ENCODE measurements at regions of chr1 and their contacts with region 1.

Region 1: DNA sequence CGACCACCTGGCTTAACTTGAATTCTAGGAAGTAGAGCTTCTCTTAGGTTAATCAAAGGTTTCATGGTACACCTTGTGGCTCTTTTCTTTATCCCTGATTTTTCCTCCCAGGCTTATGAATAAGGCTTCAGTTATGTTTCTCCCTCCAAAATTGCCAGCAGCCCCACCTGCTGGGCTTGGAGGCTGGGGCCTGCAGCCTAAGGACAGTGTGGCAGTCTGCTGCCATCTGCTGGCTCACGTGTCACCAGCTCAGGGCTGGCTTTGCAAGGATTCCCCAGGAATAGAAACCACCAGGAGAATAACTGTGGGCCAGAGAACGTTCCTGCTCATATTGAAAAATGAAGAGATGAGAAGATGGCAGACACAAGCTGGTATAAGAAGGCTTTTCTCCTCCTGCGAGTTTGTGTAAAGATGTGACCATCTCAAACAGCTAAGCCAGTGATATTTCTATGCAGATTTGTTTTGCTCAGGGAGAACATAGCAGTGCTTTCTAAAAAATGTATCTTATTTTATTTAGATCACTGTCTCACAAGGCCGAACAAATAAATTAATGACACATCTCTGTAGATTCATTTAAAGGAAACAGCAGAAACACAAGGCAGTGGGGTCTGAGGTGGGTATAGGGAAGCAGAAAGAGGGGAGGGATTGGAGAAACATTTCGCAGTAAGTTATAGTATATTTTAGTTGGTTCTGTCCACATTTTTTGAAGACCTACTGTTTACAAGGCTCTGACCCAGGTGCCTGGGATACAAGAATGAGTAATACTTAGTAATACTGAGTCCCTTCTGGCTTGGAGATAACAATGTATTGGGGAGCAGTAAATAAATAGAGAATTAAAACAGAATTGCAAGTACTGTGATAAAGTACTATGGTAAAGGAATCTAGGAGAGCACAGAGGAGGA is 291.1 kb upstream of the SGIP1 start:
- DNase-seq: peak; percentile 64 to 84 (median 70)
- ATAC-seq: peak; percentile 100
- H3K4me3 ChIP-seq: no peak overlapping the region
- H3K27ac ChIP-seq: no peak overlapping the region
- H3K4me1 ChIP-seq: no peaks in the 10 kb centered on the region
- H3K27me3 ChIP-seq: peaks cover 0 to 2% of the 10 kb centered on the region in 2 experiments; a peak in 1 of 5 replicates
- CTCF ChIP-seq: peak; percentile 99 to 100 (median 100)
- EP300 ChIP-seq: no peak
- POLR2A ChIP-seq: no peak
- RAD21 ChIP-seq: peak; percentile 93 to 98

Region 2: GRCh38 chr1:65717815-65718454 is 525.0 kb before region 1 on chr1:
- CTCF ChIA-PET with region 1: interaction called, 3 read pairs
- POLR2A ChIA-PET with region 1: no interaction called
- in situ Hi-C with region 1: loop called (anchors 25 kb)
- intact Hi-C with region 1: loop called (anchors 1 kb)
- DNase-seq: peak in 1 of 4 experiments; percentile 23
- ATAC-seq: peak; percentile 81
- H3K4me3 ChIP-seq: no peak overlapping the region
- H3K27ac ChIP-seq: no peak overlapping the region
- H3K4me1 ChIP-seq: no peaks in the 10 kb centered on the region
- H3K27me3 ChIP-seq: peaks cover 0 to 9% of the 10 kb centered on the region in 2 experiments; a peak in 1 of 5 replicates
- CTCF ChIP-seq: peak; percentile 31 to 53 (median 40); a peak in 3 of 6 replicates
- EP300 ChIP-seq: no peak
- POLR2A ChIP-seq: no peak
- RAD21 ChIP-seq: peak; percentile 43 to 80